ENCODE measurements at regions of chr3 and their contacts with region 1.

Region 1: GRCh38 chr3:186815435-186815834 is 9.2 kb upstream of the RFC4 start:
- DNase-seq: no peak
- H3K4me3 ChIP-seq: no peak overlapping the region
- H3K27ac ChIP-seq: no peak overlapping the region
- H3K4me1 ChIP-seq: no peaks in the 10 kb centered on the region
- H3K27me3 ChIP-seq: peaks cover 3% of the 10 kb centered on the region
- CTCF ChIP-seq: no peak
- EP300 ChIP-seq: no peak
- POLR2A ChIP-seq: no peak

Region 2: GRCh38 chr3:186609247-186609868 is 206.1 kb before region 1 on chr3:
- in situ Hi-C with region 1: loop called (anchors 5 to 25 kb)
- intact Hi-C with region 1: no loop called
- DNase-seq: no peak
- H3K4me3 ChIP-seq: no peak overlapping the region
- H3K27ac ChIP-seq: no peak overlapping the region
- H3K4me1 ChIP-seq: no peaks in the 10 kb centered on the region
- H3K27me3 ChIP-seq: peaks cover 5% of the 10 kb centered on the region
- CTCF ChIP-seq: peak in 1 of 5 experiments; percentile 5
- EP300 ChIP-seq: no peak
- POLR2A ChIP-seq: no peak